Mammary epithelial cell (primary cell): ENCODE measurements at regions of chr15 and their contacts with region 1.

Region 1: GRCh38 chr15:47443839-47444238 is 273.5 kb upstream of the SEMA6D start:
- DNase-seq: peak; percentile 86
- H3K4me3 ChIP-seq: no peak overlapping the region
- H3K27ac ChIP-seq: peak overlapping the region; percentile 87
- H3K4me1 ChIP-seq: peaks cover 26% of the 10 kb centered on the region
- H3K27me3 ChIP-seq: no peaks in the 10 kb centered on the region
- CTCF ChIP-seq: no peak

Region 2: GRCh38 chr15:47466351-47466750 is 22.5 kb after region 1 on chr15:
- CTCF ChIA-PET with region 1: no interaction called
- dilution Hi-C with region 1: no loop called
- in situ Hi-C with region 1: no loop called
- intact Hi-C with region 1: loop called (anchors 2 kb)
- DNase-seq: peak; percentile 77
- H3K4me3 ChIP-seq: no peak overlapping the region
- H3K27ac ChIP-seq: peak overlapping the region; percentile 92
- H3K4me1 ChIP-seq: peaks cover 17% of the 10 kb centered on the region
- H3K27me3 ChIP-seq: no peaks in the 10 kb centered on the region
- CTCF ChIP-seq: no peak